Natural killer cell (primary cell): ENCODE measurements at regions of chr15 and their contacts with region 1.

Region 1: GRCh38 chr15:40421246-40422157 is 15.9 kb downstream of the IVD start:
- DNase-seq: peak; percentile 73 to 85
- ATAC-seq: peak; percentile 93 to 100 (median 98)
- H3K4me3 ChIP-seq: no peak overlapping the region
- H3K4me3 Mint-ChIP-seq: no peak overlapping the region
- H3K27ac ChIP-seq: no peak overlapping the region
- H3K27ac Mint-ChIP-seq: no peak overlapping the region
- H3K4me1 ChIP-seq: peaks cover 6% of the 10 kb centered on the region
- H3K4me1 Mint-ChIP-seq: no peaks in the 10 kb centered on the region
- H3K27me3 ChIP-seq: no peaks in the 10 kb centered on the region
- H3K27me3 Mint-ChIP-seq: no peaks in the 10 kb centered on the region
- CTCF ChIP-seq: peak; percentile 86

Region 2: DNA sequence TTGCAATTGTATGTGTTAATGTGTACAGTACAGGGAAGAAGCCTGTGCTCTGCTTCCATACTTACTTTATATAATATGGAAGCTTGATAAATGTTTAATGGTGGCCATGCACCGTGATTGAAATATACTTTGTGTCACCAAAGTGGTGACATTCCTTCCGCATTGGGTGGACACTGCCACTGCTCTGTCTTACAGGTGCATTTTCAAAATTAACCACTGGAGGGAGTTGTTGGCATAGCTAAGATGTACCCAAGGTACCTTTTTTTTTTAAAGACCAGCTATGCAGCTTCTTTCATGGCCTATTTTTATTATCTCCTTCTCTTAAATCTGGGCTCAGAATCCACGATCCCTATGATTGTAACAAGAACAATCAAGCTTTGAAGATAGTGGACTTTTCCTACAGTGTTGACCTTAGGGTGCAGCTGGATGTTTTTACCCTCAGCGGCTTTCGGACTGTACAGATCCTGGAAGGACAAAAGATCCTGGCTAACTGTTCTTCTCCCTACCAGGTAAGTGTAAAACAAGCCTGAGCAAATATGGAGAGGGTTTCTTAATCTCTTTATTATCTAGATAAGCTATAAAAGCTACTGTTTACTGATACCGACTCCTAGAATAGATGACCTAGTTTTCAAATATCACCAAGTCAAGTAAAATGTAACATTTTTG is 204.2 kb before region 1 on chr15:
- intact Hi-C with region 1: loop called (anchors 1 kb)
- DNase-seq: peak in 1 of 2 donors; percentile 87
- ATAC-seq: peak; percentile 93 to 99 (median 99)
- H3K4me3 ChIP-seq: no peak overlapping the region
- H3K4me3 Mint-ChIP-seq: no peak overlapping the region
- H3K27ac ChIP-seq: no peak overlapping the region
- H3K27ac Mint-ChIP-seq: no peak overlapping the region
- H3K4me1 ChIP-seq: no peaks in the 10 kb centered on the region
- H3K4me1 Mint-ChIP-seq: peaks cover 0 to 7% of the 10 kb centered on the region in 2 donors
- H3K27me3 ChIP-seq: no peaks in the 10 kb centered on the region
- H3K27me3 Mint-ChIP-seq: no peaks in the 10 kb centered on the region
- CTCF ChIP-seq: peak; percentile 93

Region 3: GRCh38 chr15:40344631-40345120 is 76.8 kb before region 1 on chr15:
- intact Hi-C with region 1: loop called (anchors 1 kb)
- DNase-seq: peak; percentile 62 to 82
- ATAC-seq: peak; percentile 74 to 99 (median 94)
- H3K4me3 ChIP-seq: no peak overlapping the region
- H3K4me3 Mint-ChIP-seq: no peak overlapping the region
- H3K27ac ChIP-seq: no peak overlapping the region
- H3K27ac Mint-ChIP-seq: no peak overlapping the region
- H3K4me1 ChIP-seq: peaks cover 17% of the 10 kb centered on the region
- H3K4me1 Mint-ChIP-seq: peaks cover 0 to 5% of the 10 kb centered on the region in 2 donors
- H3K27me3 ChIP-seq: no peaks in the 10 kb centered on the region
- H3K27me3 Mint-ChIP-seq: no peaks in the 10 kb centered on the region
- CTCF ChIP-seq: peak; percentile 77

Region 4: GRCh38 chr15:40367686-40368611 is 53.6 kb before region 1 on chr15:
- intact Hi-C with region 1: loop called (anchors 1 kb)
- DNase-seq: peak; percentile 85 to 95
- ATAC-seq: peak; percentile 96 to 98 (median 97)
- H3K4me3 ChIP-seq: peak overlapping the region; percentile 64
- H3K4me3 Mint-ChIP-seq: peak overlapping the region; percentile 91
- H3K27ac ChIP-seq: peak overlapping the region; percentile 68
- H3K27ac Mint-ChIP-seq: peak overlapping the region; percentile 84 to 91
- H3K4me1 ChIP-seq: peaks cover 31% of the 10 kb centered on the region
- H3K4me1 Mint-ChIP-seq: peaks cover 18 to 33% of the 10 kb centered on the region in 2 donors
- H3K27me3 ChIP-seq: no peaks in the 10 kb centered on the region
- H3K27me3 Mint-ChIP-seq: no peaks in the 10 kb centered on the region
- CTCF ChIP-seq: peak; percentile 94